GM12878 (cell line): ENCODE measurements at regions of chr4 and their contacts with region 1.

Region 1: GRCh38 chr4:27916452-27917184 is 1056.0 kb downstream of the STIM2 start:
- DNase-seq: no peak
- ATAC-seq: no peak
- H3K4me3 ChIP-seq: no peak overlapping the region
- H3K27ac ChIP-seq: no peak overlapping the region
- H3K4me1 ChIP-seq: no peaks in the 10 kb centered on the region
- H3K27me3 ChIP-seq: no peaks in the 10 kb centered on the region
- CTCF ChIP-seq: no peak
- EP300 ChIP-seq: no peak
- POLR2A ChIP-seq: no peak
- RAD21 ChIP-seq: no peak

Region 2: DNA sequence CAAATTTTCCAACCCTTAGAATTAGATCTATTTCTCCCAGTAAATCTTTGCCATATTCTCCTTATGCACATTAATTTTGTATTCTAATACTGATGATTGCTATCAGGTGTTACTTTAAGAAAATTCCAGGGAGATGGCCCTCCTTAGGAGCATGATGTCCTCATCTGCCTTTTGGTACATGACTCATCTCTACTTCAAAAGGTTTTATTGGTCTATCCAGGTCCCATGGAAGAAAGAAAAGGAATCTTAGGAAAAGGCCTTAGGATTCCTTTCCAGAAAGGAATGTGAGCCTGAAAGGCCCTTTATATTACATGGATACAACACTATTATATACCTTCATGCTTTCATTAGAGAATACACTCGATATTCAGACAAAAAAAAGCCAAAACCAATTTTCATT is 87.8 kb before region 1 on chr4:
- CTCF ChIA-PET with region 1: no interaction called
- POLR2A ChIA-PET with region 1: no interaction called
- RAD21 ChIA-PET with region 1: no interaction called
- SMC1A ChIA-PET with region 1: no interaction called
- in situ Hi-C with region 1: no loop called
- intact Hi-C with region 1: no loop called
- DNase-seq: no peak
- ATAC-seq: no peak
- H3K4me3 ChIP-seq: no peak overlapping the region
- H3K27ac ChIP-seq: no peak overlapping the region
- H3K4me1 ChIP-seq: no peaks in the 10 kb centered on the region
- H3K27me3 ChIP-seq: no peaks in the 10 kb centered on the region
- CTCF ChIP-seq: no peak
- EP300 ChIP-seq: no peak
- POLR2A ChIP-seq: no peak
- RAD21 ChIP-seq: no peak

Region 3: GRCh38 chr4:27881705-27882104 is 34.9 kb before region 1 on chr4:
- CTCF ChIA-PET with region 1: no interaction called
- POLR2A ChIA-PET with region 1: interaction called, 10 read pairs
- RAD21 ChIA-PET with region 1: no interaction called
- SMC1A ChIA-PET with region 1: interaction called, 3 read pairs
- in situ Hi-C with region 1: no loop called
- intact Hi-C with region 1: no loop called
- DNase-seq: no peak
- ATAC-seq: peak; percentile 64
- H3K4me3 ChIP-seq: no peak overlapping the region
- H3K27ac ChIP-seq: no peak overlapping the region
- H3K4me1 ChIP-seq: no peaks in the 10 kb centered on the region
- H3K27me3 ChIP-seq: no peaks in the 10 kb centered on the region
- CTCF ChIP-seq: no peak
- EP300 ChIP-seq: no peak
- POLR2A ChIP-seq: no peak
- RAD21 ChIP-seq: no peak

Region 4: DNA sequence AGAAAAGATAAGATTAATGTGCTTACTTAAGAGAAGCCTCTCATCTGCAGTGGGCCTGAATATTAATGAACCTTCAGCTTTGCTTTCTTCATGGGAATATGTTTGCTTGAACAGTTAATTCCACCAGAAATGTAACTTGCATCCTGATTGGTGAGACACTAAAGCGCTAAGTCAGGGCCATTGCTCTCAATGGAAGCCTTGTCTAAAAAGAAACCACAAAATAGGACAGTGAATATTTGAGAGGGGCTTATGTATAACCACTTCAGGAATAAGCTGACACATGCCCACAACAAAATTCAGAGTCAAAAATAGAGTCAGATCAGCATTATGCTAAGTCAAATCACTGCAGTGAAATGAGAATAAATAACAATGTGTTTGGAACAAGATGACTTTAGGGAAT is 69.9 kb after region 1 on chr4:
- CTCF ChIA-PET with region 1: no interaction called
- POLR2A ChIA-PET with region 1: no interaction called
- RAD21 ChIA-PET with region 1: no interaction called
- SMC1A ChIA-PET with region 1: no interaction called
- in situ Hi-C with region 1: no loop called
- intact Hi-C with region 1: no loop called
- DNase-seq: no peak
- ATAC-seq: no peak
- H3K4me3 ChIP-seq: no peak overlapping the region
- H3K27ac ChIP-seq: no peak overlapping the region
- H3K4me1 ChIP-seq: no peaks in the 10 kb centered on the region
- H3K27me3 ChIP-seq: no peaks in the 10 kb centered on the region
- CTCF ChIP-seq: no peak
- EP300 ChIP-seq: no peak
- POLR2A ChIP-seq: no peak
- RAD21 ChIP-seq: no peak

Region 5: DNA sequence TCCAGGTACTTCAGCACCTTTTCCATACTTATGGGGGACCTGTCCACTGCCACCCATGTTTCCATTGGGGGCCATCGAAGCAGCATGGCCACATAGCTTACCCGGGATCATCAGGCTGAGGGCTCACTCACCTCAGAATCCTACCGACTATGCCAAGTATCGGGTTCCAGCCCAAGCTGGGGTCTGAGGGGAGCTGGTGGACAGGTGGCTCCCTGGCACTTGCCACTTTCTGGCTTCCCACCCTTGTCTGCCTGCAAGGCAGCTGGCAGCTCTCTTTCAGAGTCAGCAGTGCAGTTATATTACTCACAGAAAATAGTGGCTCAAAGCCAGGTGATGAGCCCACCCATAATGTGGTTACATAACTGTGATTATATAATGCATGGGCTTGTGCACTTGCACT is 97.9 kb after region 1 on chr4:
- CTCF ChIA-PET with region 1: no interaction called
- POLR2A ChIA-PET with region 1: no interaction called
- RAD21 ChIA-PET with region 1: no interaction called
- SMC1A ChIA-PET with region 1: no interaction called
- in situ Hi-C with region 1: no loop called
- intact Hi-C with region 1: no loop called
- DNase-seq: no peak
- ATAC-seq: no peak
- H3K4me3 ChIP-seq: no peak overlapping the region
- H3K27ac ChIP-seq: no peak overlapping the region
- H3K4me1 ChIP-seq: no peaks in the 10 kb centered on the region
- H3K27me3 ChIP-seq: no peaks in the 10 kb centered on the region
- CTCF ChIP-seq: no peak
- EP300 ChIP-seq: no peak
- POLR2A ChIP-seq: no peak
- RAD21 ChIP-seq: no peak